Right ventricle myocardium inferior (tissue), 1 donor: ENCODE measurements at regions of chr13 and their contacts with region 1.

Region 1: DNA sequence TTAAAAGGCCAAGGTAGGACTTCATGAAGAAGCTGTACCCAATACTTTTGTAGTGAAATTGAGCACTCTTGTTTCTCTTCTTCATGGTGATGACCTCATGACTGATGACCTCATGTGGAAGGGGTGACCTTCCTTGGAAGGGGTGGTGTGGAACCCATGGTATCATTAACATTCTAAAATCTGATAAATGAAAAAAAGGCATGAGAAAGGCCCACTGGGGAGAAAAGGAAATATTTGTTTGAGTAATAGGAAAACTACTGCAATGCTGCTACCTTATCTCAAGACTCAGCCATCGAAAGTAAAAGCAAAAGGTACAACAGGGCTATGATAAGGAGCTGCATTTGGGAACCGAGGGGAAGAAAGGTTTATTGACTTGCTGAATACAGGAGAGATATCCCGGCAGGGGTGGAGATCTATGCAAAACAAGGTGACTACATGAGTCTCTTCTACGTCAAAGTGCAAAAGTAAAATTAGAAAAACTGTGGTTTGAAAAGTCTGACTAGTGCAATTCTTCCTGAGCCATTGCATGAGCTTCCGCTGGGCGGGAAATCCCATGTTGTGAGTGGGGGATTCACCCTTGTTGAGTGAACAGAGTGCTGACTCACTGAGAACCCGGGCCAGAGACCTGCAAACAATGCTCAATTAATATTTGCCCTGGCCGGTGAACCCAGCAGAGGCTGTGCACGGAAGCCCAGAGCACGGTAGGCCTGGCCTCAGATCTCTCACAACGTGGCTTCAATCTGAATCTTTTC is 138.9 kb upstream of the RFC3 start:
- DNase-seq: peak; percentile 74
- ATAC-seq: peak; percentile 26

Region 2: DNA sequence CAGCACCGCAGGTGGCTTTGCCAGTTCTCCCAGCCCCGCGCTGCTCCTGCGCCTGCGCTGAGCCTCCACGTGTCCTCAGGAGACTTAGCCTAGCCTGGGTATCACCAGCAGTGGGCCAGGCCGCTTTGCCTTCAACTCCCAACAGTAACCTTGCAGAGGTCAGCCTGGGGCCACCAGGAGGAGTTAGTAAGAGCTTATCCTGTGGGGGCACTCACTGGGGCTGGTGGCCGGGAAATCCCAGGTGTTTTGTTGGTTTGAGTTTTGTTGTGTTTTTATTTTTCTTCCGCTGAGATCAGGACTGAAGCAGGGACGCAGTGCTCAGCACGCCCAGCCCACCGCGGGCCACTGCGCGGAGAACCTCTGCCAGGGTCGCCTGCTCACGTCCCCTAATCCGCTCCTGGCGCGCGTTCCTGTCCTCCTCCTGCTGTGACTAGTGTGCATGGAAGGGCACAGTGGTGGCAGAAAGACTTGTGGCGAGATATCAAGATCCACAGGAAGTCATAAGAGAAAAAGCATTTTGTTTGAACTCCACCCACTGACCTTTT is 68.5 kb before region 1 on chr13:
- intact Hi-C with region 1: loop called (anchors 2 kb)
- DNase-seq: peak; percentile 86
- ATAC-seq: peak; percentile 88

Region 3: DNA sequence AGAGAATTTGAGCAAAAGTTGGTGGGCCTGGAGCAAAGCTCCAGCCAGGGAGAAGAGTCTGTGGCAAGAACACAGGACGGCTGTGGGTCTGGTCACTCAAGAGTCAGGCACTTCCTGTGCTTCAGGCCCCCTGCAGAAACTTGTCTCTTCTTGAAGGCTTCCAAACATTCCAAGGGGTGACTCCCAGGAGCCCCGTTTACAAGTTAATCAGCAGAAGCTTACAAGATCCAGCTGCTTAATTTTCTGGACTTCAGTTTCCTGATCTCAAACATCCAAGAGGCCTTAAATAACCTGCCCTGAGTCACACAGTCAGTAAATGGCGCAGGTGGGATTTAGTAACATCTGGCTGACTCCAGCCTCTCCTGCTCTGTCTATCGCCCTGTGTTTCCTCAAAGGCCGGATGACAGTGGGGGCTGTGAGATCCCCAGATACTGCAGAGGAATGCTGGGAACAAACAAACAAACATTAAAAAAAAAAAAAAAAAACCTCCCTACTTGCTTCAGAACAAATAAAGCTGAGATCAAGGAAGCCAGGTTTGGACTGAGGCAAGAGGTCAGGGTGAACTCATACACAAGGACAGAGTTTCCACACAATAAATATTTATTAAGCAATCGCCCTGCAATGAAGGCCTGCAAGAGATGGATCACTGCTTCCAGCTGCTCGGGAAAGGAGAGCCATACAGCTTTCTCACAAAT is 36.6 kb before region 1 on chr13:
- intact Hi-C with region 1: loop called (anchors 5 kb)
- DNase-seq: no peak
- ATAC-seq: peak; percentile 75

Region 4: DNA sequence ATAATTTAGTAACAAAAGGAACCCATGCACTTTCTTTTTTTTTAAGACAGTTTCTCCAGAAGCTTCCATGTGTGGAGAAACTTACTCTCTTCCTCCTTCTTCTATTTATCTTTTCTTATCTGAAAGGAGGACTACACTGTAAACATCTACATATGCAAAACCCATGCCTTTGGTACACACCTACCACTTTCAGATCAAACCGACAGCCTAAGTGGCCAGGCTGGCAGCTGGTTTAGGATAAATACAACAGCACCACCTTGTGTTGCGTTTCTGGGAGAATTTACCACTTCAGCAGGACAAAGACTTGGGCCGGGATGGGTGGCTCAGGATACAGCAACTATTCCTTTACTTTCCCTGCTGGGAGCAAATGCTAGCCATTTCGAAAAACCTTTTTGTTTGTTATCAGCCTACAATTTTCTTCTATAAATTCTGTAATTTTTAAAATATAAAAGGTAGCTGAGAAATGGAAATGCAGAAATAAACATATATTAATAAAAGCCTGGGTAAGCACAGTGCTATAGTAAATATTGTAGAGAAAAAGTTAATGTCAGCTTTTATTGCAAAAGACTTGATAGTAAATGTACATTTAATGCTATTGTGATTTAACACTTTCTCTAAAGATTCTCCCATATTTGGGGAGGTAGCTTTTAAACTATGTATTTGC is 44.8 kb after region 1 on chr13:
- intact Hi-C with region 1: loop called (anchors 5 kb)
- DNase-seq: peak; percentile 84
- ATAC-seq: peak; percentile 85